ENCODE measurements at regions of chr5 and their contacts with region 1.

Region 1: GRCh38 chr5:109688971-109689739 is 572 bp upstream of the MAN2A1 start:
- DNase-seq: peak; percentile 92
- H3K4me3 ChIP-seq: peak overlapping the region; percentile 79 to 87 (median 83)
- H3K27ac ChIP-seq: peak overlapping the region; percentile 81
- H3K4me1 ChIP-seq: peaks cover 8% of the 10 kb centered on the region
- H3K27me3 ChIP-seq: no peaks in the 10 kb centered on the region
- CTCF ChIP-seq: no peak
- POLR2A ChIP-seq: peak; percentile 82

Region 2: GRCh38 chr5:108642167-108642906 is 1046.8 kb before region 1 on chr5:
- CTCF ChIA-PET with region 1: interaction called, 10 read pairs
- POLR2A ChIA-PET with region 1: no interaction called
- dilution Hi-C with region 1: no loop called
- intact Hi-C with region 1: loop called (anchors 2 kb)
- DNase-seq: peak; percentile 82
- H3K4me3 ChIP-seq: no peak overlapping the region
- H3K27ac ChIP-seq: no peak overlapping the region
- H3K4me1 ChIP-seq: peaks cover 5% of the 10 kb centered on the region
- H3K27me3 ChIP-seq: no peaks in the 10 kb centered on the region
- CTCF ChIP-seq: peak; percentile 84 to 93
- POLR2A ChIP-seq: no peak

Region 3: GRCh38 chr5:109304309-109304708 is 384.8 kb before region 1 on chr5:
- CTCF ChIA-PET with region 1: no interaction called
- POLR2A ChIA-PET with region 1: no interaction called
- dilution Hi-C with region 1: no loop called
- intact Hi-C with region 1: no loop called
- DNase-seq: no peak
- H3K4me3 ChIP-seq: no peak overlapping the region
- H3K27ac ChIP-seq: no peak overlapping the region
- H3K4me1 ChIP-seq: no peaks in the 10 kb centered on the region
- H3K27me3 ChIP-seq: peaks cover 0 to 7% of the 10 kb centered on the region in 2 experiments
- CTCF ChIP-seq: no peak
- POLR2A ChIP-seq: no peak

Region 4: GRCh38 chr5:109409844-109410388 is 279.2 kb before region 1 on chr5 and contains the start of gene PJA2:
- CTCF ChIA-PET with region 1: no interaction called
- POLR2A ChIA-PET with region 1: no interaction called
- dilution Hi-C with region 1: no loop called
- intact Hi-C with region 1: loop called (anchors 1 kb)
- DNase-seq: peak; percentile 100
- H3K4me3 ChIP-seq: peak within 1 kb of the TSS; percentile 47 to 97 (median 88)
- H3K27ac ChIP-seq: peak within 1 kb of the TSS; percentile 97
- H3K4me1 ChIP-seq: peaks cover 18% of the 10 kb centered on the region
- H3K27me3 ChIP-seq: no peaks in the 10 kb centered on the region
- CTCF ChIP-seq: peak in 1 of 2 donors; percentile 22
- POLR2A ChIP-seq: peak; percentile 49
- total RNA-seq, gene PJA2: 61.8 and 64.9 TPM in 2 replicates

Region 5: DNA sequence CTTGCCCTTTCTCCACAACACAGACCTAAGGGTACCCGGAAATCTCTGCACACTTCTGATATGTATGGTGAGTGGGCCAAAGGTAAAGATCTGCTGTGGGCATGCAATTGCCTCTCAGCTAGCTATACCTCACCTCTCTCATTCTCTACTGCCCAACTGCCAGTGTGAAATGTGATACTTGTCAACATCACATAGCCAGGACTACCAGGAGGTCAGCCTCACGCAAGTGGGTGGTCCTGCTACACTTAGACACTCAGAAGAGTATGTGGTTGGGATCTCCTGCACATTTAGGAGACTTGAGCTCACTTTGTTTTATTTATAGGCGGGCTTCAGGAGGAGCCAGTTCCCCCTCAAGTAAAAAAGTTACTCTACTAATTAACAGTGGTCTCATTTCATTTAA is 87.4 kb before region 1 on chr5:
- CTCF ChIA-PET with region 1: no interaction called
- POLR2A ChIA-PET with region 1: no interaction called
- dilution Hi-C with region 1: no loop called
- intact Hi-C with region 1: no loop called
- DNase-seq: no peak
- H3K4me3 ChIP-seq: no peak overlapping the region
- H3K27ac ChIP-seq: no peak overlapping the region
- H3K4me1 ChIP-seq: no peaks in the 10 kb centered on the region
- H3K27me3 ChIP-seq: no peaks in the 10 kb centered on the region
- CTCF ChIP-seq: no peak
- POLR2A ChIP-seq: no peak

Region 6: DNA sequence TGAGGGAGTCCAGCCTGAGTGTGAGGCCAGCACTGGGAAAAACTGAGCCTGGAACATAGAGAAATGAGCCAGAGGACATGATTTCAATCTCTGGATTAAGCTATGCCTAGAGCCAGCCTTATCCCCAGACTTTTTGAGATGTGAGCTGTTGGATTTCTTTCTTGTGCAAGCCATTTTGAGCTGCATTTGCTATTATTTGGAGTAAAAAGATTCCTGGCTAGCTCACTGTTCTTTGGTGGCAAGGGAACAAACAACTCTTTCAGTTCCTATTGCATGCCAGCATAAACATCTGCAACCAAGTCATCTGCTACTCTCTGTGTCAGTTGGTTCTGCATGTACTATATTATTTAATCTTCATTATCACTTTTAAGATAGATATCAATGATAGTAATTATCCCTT is 69.5 kb before region 1 on chr5:
- CTCF ChIA-PET with region 1: no interaction called
- POLR2A ChIA-PET with region 1: no interaction called
- dilution Hi-C with region 1: no loop called
- intact Hi-C with region 1: no loop called
- DNase-seq: no peak
- H3K4me3 ChIP-seq: no peak overlapping the region
- H3K27ac ChIP-seq: no peak overlapping the region
- H3K4me1 ChIP-seq: no peaks in the 10 kb centered on the region
- H3K27me3 ChIP-seq: peaks cover 0 to 2% of the 10 kb centered on the region in 2 experiments
- CTCF ChIP-seq: no peak
- POLR2A ChIP-seq: no peak

Region 7: GRCh38 chr5:109656829-109657228 is 32.3 kb before region 1 on chr5:
- CTCF ChIA-PET with region 1: interaction called, 7 read pairs
- POLR2A ChIA-PET with region 1: interaction called, 5 read pairs
- dilution Hi-C with region 1: no loop called
- intact Hi-C with region 1: loop called (anchors 1 kb)
- DNase-seq: peak; percentile 60
- H3K4me3 ChIP-seq: no peak overlapping the region
- H3K27ac ChIP-seq: peak overlapping the region; percentile 80
- H3K4me1 ChIP-seq: peaks cover 16% of the 10 kb centered on the region
- H3K27me3 ChIP-seq: no peaks in the 10 kb centered on the region
- CTCF ChIP-seq: no peak
- POLR2A ChIP-seq: no peak

Region 8: DNA sequence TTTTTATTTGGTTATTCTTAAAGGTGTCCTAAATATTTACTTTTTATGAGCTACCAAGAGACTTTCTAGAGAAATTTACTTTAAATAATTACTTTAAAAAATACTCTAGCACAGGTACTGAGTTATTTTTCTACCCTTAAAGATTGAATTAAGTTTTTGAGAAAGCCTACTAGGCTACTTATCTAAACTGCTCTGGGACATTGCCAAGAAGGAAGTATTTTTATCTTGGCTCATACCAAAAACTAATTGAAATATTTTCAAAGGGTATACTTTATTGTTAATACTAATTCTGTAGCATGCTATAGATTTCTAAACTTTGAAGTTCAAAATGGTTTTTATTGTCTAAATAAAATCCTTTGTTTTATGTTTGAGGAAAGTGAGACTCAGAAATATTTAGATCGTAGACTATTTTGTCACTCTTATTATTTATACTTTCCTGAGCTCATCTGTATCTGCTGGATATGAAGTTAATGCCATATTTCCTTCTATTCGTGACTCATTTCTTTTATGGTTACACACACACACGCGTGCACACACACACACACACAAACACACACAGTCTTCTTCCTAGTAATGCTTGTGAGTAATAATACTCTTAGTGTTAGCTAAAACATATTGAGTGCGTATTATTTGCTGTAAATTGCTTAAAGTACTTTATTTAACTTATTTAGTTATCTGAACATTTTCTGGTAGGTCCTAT is 90.0 kb after region 1 on chr5:
- CTCF ChIA-PET with region 1: interaction called, 6 read pairs
- POLR2A ChIA-PET with region 1: no interaction called
- dilution Hi-C with region 1: no loop called
- intact Hi-C with region 1: loop called (anchors 2 kb)
- DNase-seq: peak; percentile 85
- H3K4me3 ChIP-seq: peak overlapping the region in 1 of 3 experiments; percentile 40
- H3K27ac ChIP-seq: peak overlapping the region; percentile 60
- H3K4me1 ChIP-seq: peaks cover 21% of the 10 kb centered on the region
- H3K27me3 ChIP-seq: no peaks in the 10 kb centered on the region
- CTCF ChIP-seq: no peak
- POLR2A ChIP-seq: no peak

Region 9: DNA sequence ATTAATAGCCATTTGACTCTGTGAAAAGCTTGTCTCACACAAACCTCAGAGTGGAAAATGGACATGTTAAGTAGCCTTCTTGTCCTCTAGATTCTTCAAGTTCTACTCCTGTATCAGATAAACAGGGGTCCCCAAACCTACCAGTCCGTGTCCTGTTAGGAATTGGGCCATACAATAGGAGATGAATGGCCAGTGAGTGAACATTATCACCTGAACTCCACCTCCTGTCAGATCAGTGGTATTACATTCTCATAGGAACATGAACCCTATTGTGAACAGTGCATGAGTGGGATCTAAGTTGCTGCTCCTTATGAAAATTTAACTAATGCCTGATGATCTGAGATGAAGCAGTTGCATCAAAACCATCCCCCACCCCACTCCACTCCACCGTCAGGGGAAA is 901.0 kb after region 1 on chr5:
- CTCF ChIA-PET with region 1: interaction called, 5 read pairs
- POLR2A ChIA-PET with region 1: no interaction called
- dilution Hi-C with region 1: no loop called
- intact Hi-C with region 1: loop called (anchors 1 kb)
- DNase-seq: peak; percentile 9
- H3K4me3 ChIP-seq: no peak overlapping the region
- H3K27ac ChIP-seq: no peak overlapping the region
- H3K4me1 ChIP-seq: no peaks in the 10 kb centered on the region
- H3K27me3 ChIP-seq: no peaks in the 10 kb centered on the region
- CTCF ChIP-seq: peak in 1 of 2 donors; percentile 16
- POLR2A ChIP-seq: no peak